ENCODE measurements at regions of chr4 and their contacts with region 1.

Region 1: GRCh38 chr4:47463235-47463956 is at the start of gene COMMD8:
- DNase-seq: peak; percentile 95 to 99 (median 98)
- ATAC-seq: peak; percentile 97 to 99 (median 99)
- H3K4me3 ChIP-seq: peak within 1 kb of the TSS; percentile 64 to 92 (median 77)
- H3K27ac ChIP-seq: peak within 1 kb of the TSS; percentile 29 to 92 (median 86)
- H3K4me1 ChIP-seq: peaks cover 0 to 30% (median 4%) of the 10 kb centered on the region in 12 donors
- H3K27me3 ChIP-seq: no peaks in the 10 kb centered on the region
- CTCF ChIP-seq: peak in 9 of 12 donors; percentile 13 to 61 (median 32)
- POLR2A ChIP-seq: peak in 1 of 2 donors; percentile 82
- total RNA-seq, gene COMMD8: 4.6 to 22.3 (median 18.4) TPM

Region 2: DNA sequence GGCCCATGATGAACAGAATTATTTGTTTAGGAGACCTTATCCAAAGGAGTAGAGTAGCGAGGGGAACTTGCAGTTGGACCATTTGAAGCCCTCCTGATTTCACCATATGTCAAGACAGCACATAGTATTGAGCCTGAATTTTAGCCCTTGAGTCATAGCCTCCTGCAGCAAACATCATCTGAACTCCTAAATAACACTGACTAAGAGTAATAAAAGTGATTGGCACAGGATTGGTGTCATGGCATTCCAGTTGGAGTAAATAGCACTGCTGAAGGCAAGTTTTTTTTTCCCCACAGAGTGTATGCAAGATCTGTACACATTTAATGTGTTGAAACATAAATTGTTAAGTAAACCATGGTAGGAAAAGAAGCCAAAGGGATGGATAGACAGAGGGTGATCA is 88.9 kb before region 1 on chr4:
- intact Hi-C with region 1: no loop called
- DNase-seq: no peak
- ATAC-seq: no peak
- H3K4me3 ChIP-seq: no peak overlapping the region
- H3K27ac ChIP-seq: no peak overlapping the region
- H3K4me1 ChIP-seq: no peaks in the 10 kb centered on the region
- H3K27me3 ChIP-seq: no peaks in the 10 kb centered on the region
- CTCF ChIP-seq: no peak
- POLR2A ChIP-seq: no peak

Region 3: DNA sequence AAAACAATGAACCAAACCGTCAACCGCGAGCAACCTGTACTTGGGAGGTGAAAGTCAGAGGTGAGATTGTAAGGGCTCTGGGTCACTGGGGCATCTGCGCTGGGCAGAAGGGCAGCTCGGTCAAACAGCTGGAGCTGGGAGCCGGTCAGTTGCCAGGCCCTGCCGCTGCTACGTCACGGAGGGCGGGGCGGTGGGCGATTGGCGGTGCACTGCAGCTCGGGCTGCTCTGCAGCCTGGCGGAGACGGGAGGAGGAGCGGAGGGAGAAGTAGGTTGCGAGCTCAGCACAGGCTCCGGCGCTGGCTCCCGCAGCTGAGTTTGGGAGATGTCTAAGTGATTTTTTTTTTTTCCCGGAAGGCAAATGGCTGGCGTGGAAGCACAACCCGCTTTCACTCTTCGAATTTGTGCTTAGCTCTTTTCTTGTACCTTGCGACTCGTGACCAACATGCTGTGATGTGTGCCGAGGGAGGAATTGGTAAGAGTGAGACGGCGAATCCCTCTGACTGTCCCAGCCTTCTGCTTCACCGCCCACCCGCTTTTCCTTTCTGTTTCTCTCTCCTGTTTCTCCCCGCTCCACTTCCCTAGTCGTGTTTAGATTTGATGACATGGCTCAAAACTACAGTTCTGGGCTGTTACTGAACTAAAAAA is 21.8 kb after region 1 on chr4 and contains the start of gene ATP10D:
- intact Hi-C with region 1: loop called in 4 of 10 experiments (anchors 1 to 2 kb)
- DNase-seq: peak; percentile 96 to 98 (median 98)
- ATAC-seq: peak; percentile 99 to 100 (median 100)
- H3K4me3 ChIP-seq: peak within 1 kb of the TSS; percentile 40 to 76 (median 68)
- H3K27ac ChIP-seq: peak within 1 kb of the TSS; percentile 62 to 94 (median 92)
- H3K4me1 ChIP-seq: peaks cover 0 to 38% (median 12%) of the 10 kb centered on the region in 12 donors
- H3K27me3 ChIP-seq: no peaks in the 10 kb centered on the region
- CTCF ChIP-seq: peak in 4 of 12 donors; percentile 24 to 50 (median 38)
- POLR2A ChIP-seq: peak in 1 of 2 donors; percentile 90
- total RNA-seq, gene ATP10D: 5.4 to 22.1 (median 8.1) TPM

Region 4: DNA sequence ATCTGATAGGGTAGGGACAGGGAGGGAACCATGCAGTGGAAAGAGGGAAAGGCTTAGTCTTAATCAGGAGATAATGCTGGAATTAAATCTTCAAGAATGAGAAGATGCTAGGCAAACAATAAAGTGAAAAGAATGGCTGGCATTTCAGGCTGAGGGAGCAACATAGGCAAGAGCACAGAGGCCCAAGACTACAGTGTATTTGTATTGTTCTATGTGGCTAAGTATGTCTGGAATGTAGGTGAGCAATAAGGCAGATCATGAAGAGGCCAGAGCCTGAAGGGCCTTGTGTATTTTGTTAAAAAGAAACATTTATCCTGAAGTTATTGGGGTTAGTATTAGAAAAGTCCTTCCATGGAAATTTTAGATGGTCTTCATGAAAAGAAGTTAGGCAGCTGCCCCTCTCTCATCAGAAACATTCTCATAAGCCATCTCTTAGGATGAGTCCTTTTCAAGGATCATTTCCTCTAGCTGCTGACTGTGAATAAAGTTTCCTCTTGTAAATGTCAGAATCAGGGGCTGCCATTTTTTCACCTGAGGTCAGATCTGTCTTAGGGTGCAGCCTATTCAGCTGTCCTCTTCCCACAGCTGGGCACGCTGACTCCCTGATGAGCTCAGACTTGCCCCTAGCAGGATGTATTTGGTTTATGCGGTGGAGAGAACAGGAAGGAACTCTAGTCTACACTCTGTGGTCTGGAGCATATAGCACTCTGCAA is 68.0 kb after region 1 on chr4:
- intact Hi-C with region 1: loop called in 1 of 10 experiments (anchors 2 kb)
- DNase-seq: peak in 4 of 5 donors; percentile 13 to 35 (median 24)
- ATAC-seq: peak; percentile 42 to 89 (median 88)
- H3K4me3 ChIP-seq: no peak overlapping the region
- H3K27ac ChIP-seq: peak overlapping the region in 9 of 12 donors; percentile 3 to 59 (median 24)
- H3K4me1 ChIP-seq: peaks cover 0 to 28% (median 14%) of the 10 kb centered on the region in 12 donors
- H3K27me3 ChIP-seq: no peaks in the 10 kb centered on the region
- CTCF ChIP-seq: no peak
- POLR2A ChIP-seq: no peak

Region 5: GRCh38 chr4:47562297-47562696 is 98.9 kb after region 1 on chr4:
- intact Hi-C with region 1: loop called in 5 of 10 experiments (anchors 5 to 10 kb)
- DNase-seq: no peak
- ATAC-seq: no peak
- H3K4me3 ChIP-seq: no peak overlapping the region
- H3K27ac ChIP-seq: no peak overlapping the region
- H3K4me1 ChIP-seq: peaks cover 0 to 3% (median 0%) of the 10 kb centered on the region in 12 donors
- H3K27me3 ChIP-seq: no peaks in the 10 kb centered on the region
- CTCF ChIP-seq: no peak
- POLR2A ChIP-seq: no peak

Region 6: DNA sequence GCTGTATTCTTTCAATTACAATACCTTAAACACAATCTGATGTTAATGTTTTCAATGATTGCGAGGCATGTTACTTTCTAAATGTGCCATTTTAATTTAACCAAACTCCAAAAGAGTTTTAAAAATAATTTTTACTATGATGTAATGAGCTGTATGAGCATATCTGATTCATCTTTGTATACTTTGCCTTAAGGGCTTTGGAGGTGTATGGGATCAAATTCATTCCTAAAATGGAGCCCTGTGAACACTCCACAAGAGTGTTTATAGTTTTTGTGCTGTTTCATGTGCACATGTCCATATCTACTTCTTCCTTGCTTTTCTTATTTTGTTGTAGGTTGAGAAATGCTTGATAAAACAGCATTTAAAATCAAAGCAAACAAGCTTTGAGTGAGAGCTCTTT is 104.1 kb after region 1 on chr4:
- intact Hi-C with region 1: loop called in 5 of 10 experiments (anchors 5 to 10 kb)
- DNase-seq: no peak
- ATAC-seq: no peak
- H3K4me3 ChIP-seq: no peak overlapping the region
- H3K27ac ChIP-seq: no peak overlapping the region
- H3K4me1 ChIP-seq: peaks cover 0 to 3% (median 0%) of the 10 kb centered on the region in 12 donors
- H3K27me3 ChIP-seq: no peaks in the 10 kb centered on the region
- CTCF ChIP-seq: no peak
- POLR2A ChIP-seq: no peak

Measured in heart left ventricle (tissue), 16 donors.